Activated CD4-positive, alpha-beta T cell treated with anti-CD3 and anti-CD28 coated beads, Interleukin-2, amount 10 ng/mL, durations not matched to agents 24 days and 14 days (primary cell): ENCODE measurements at regions of chr7 and their contacts with region 1.

Region 1: DNA sequence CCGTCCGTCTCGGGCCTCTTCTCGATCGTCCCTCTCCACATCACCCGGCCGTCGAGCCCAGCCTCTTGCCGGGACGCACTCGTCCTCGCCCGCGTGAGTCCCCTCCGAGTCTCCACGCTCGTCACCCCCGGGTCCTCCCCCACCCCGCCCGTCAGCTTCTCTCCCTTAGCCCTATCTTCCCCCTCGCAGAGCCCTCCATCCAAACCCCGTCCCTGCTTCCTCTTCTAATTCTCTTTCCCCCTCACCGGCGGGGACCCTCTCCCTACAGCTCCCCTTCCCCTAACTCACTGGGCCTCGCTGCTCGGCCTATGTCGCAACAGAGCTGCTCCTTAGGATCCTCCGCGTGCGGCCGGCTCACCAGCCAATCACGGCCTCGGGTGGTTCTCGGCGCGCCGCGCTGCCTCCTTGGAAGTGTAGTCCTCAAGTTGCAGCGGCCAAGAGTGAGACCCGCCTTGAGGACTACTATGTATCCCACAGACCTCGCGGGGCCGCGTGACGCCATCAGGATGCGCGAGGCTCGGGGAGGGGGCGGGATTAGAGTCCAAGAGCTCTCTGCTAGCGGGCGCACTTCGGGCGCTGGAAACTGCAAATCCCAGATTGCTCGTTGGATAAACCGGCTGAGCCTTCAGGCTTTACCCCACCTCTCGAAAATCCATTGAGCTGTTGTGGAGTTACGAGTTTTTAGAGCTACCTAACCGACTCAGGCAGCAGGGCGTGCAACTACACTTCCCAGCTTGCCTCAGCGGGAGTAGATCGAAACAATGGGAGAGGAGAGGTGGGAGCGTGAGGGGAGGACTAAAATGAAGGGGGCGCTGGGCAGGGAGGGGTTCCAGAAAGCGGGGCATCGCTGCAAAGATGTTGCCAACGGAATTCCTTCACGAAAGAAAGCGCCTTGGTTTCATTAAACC is at the start of gene ABCF2:
- DNase-seq: peak; percentile 99
- H3K4me3 Mint-ChIP-seq: peak within 1 kb of the TSS; percentile 97
- H3K27ac Mint-ChIP-seq: peak within 1 kb of the TSS; percentile 96
- H3K4me1 Mint-ChIP-seq: peaks cover 36% of the 10 kb centered on the region
- H3K27me3 Mint-ChIP-seq: peaks cover 6% of the 10 kb centered on the region
- total RNA-seq, gene ABCF2: 84.6 and 90.3 TPM in 2 replicates

Region 2: DNA sequence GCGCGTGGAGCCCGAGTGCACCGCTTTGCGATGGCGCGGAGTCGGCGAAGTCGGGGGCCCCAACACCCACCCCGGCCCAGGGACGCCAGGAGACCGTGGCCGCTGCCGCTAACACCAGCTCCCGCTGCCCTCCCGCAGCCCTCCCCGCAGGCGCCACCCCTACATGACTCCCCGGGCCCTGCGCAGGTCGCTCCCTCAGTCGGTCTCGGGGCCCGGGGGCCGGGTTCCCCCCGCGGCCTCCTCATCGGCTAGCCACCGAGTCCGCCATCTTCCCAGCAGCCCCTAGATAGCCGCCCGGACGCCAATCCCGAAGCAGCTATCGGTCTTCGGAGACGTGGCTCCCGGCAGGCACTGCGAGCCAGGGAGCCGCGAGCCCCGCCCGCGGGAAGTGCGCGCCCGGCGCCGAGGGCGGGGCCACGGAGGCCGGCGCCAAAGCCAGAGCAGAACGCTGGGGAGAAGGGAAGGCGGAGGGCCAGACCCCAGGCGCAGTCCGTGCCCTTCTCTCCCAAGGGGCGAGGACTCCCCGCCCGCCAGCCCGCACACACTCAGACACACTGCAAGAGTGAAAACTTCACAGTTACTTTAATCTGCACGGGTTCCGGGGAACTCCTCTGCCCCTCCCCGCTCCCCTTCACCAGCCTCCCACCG is 146.5 kb before region 1 on chr7 and contains the start of gene FASTK:
- intact Hi-C with region 1: loop called (anchors 2 kb)
- DNase-seq: peak; percentile 97
- H3K4me3 Mint-ChIP-seq: peak within 1 kb of the TSS; percentile 95
- H3K27ac Mint-ChIP-seq: peak within 1 kb of the TSS; percentile 82
- H3K4me1 Mint-ChIP-seq: peaks cover 30% of the 10 kb centered on the region
- H3K27me3 Mint-ChIP-seq: peaks cover 9% of the 10 kb centered on the region
- total RNA-seq, gene FASTK: 90.8 and 92.3 TPM in 2 replicates

Region 3: GRCh38 chr7:151181011-151181431 is 46.1 kb before region 1 on chr7:
- intact Hi-C with region 1: no loop called
- DNase-seq: no peak
- H3K4me3 Mint-ChIP-seq: no peak overlapping the region
- H3K27ac Mint-ChIP-seq: no peak overlapping the region
- H3K4me1 Mint-ChIP-seq: no peaks in the 10 kb centered on the region
- H3K27me3 Mint-ChIP-seq: peaks cover 14% of the 10 kb centered on the region

Region 4: DNA sequence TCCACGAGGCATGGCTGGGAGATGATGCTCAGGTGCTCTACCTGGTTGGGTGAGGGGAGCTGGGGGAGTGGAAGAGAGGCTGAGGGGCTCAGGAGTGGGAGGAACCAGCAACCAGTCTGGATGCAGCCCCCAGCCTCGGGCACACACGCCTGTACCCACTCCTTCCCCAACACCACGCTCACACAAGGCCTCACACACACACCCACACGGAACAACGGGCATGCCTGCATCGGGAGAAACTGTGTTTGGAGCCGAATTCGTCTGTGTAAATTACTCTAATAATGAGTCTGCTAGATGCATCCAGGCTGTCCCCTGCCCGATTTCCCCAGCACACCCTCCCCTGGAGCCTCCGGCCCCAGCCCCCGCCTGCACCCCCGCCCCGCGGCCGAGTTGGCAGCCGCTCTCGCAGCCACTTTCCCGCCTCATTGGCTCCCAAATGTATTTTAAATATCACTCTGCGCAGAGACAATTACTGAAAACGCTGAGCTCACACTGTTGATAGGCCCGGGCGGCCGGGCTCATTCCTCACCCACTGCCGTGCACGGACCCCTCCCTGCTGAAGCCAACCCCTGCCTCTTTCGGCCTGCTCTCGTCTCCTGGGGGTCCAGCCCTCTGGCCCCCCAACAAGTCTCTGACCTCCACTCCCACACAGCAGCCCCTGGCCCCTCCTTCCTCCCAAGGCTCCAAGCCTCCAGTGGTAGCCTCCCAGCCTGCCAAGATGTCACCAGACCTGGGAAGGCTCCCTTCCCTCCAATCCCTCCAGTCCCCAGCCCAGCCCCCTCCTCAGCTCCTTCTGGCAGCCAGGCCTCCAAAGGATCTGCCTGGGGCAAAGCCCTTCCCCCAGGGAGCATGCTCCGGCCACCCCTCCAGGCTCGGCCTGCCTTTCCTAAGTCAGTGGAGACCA is 27.9 kb before region 1 on chr7:
- intact Hi-C with region 1: no loop called
- DNase-seq: no peak
- H3K4me3 Mint-ChIP-seq: no peak overlapping the region
- H3K27ac Mint-ChIP-seq: no peak overlapping the region
- H3K4me1 Mint-ChIP-seq: peaks cover under 1% of the 10 kb centered on the region
- H3K27me3 Mint-ChIP-seq: peaks cover 14% of the 10 kb centered on the region

Region 5: DNA sequence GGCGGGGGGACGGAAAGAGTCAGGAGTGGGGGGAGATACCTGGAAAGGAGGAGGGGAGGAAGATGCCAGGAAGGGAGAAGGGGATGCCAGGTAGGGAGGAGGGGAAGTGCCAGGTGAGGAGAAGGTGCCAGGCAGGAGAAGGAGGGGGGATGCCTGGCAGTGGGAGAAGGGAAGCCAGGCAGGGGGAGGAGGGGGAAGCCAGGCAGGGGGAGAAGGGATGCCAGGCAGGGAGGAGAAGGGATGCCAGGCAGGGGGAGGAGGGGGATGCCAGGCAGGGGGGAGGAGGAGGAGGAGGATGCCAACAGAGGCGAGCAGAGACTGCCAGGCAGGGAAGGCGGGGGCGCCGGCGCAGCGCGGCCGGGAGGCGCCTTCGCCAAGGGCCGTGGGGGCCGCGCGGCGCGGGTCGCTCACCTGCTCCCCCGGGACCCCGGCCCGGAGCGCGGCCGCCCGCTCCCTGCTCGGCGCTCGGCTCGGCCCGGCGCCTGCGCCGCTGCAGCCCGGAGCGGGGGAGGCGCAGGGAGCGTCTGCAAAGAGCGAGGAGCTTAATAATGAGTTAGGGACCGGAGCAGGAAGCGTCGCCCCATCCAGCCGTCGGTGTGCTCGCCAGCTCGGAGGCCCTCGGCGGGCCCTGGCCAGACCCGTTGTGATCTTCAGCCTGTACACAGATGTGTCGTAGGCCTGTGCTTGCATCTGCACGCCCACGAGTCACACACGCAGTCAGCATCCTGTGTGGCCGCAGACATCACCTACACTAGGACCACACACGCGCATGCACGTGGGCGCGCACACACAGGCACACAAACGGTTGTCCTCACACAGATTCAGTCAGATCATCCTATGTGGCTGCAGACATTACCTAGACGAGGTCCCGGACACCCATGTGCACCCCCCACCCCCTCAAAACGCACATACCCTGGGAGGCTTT is 49.8 kb after region 1 on chr7:
- intact Hi-C with region 1: loop called (anchors 2 kb)
- DNase-seq: peak; percentile 87
- H3K4me3 Mint-ChIP-seq: peak overlapping the region; percentile 73
- H3K27ac Mint-ChIP-seq: peak overlapping the region; percentile 69
- H3K4me1 Mint-ChIP-seq: peaks cover 17% of the 10 kb centered on the region
- H3K27me3 Mint-ChIP-seq: peaks cover 19% of the 10 kb centered on the region